Mammary epithelial cell (primary cell): ENCODE measurements at regions of chr13 and their contacts with region 1.

Region 1: DNA sequence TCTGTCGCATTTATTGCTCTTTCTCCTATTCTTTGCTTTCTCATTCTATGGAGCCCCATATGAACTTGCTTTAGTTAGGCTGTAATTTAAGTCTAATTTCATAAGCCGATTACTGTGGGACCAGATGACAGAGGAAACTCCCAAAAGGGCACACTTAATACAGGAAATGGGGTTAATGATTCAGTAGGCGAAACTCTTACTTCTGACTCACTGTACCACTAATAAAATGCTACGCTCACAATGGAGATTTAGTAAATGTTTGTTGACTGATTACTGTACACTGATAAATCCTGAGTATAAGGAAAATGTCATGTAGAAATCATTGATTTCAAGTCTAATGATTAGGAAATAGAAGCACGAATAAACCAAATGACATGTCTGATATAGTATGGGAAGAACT is 276.4 kb downstream of the KLF5 start:
- DNase-seq: peak; percentile 95
- H3K4me3 ChIP-seq: no peak overlapping the region
- H3K27ac ChIP-seq: peak overlapping the region; percentile 100
- H3K4me1 ChIP-seq: peaks cover 48% of the 10 kb centered on the region
- H3K27me3 ChIP-seq: no peaks in the 10 kb centered on the region
- CTCF ChIP-seq: no peak

Region 2: GRCh38 chr13:72839831-72840426 is 495.3 kb before region 1 on chr13:
- CTCF ChIA-PET with region 1: no interaction called
- dilution Hi-C with region 1: no loop called
- in situ Hi-C with region 1: no loop called
- intact Hi-C with region 1: loop called (anchors 1 kb)
- DNase-seq: peak; percentile 69
- H3K4me3 ChIP-seq: no peak overlapping the region
- H3K27ac ChIP-seq: peak overlapping the region; percentile 26
- H3K4me1 ChIP-seq: no peaks in the 10 kb centered on the region
- H3K27me3 ChIP-seq: no peaks in the 10 kb centered on the region
- CTCF ChIP-seq: peak; percentile 79 to 86

Region 3: DNA sequence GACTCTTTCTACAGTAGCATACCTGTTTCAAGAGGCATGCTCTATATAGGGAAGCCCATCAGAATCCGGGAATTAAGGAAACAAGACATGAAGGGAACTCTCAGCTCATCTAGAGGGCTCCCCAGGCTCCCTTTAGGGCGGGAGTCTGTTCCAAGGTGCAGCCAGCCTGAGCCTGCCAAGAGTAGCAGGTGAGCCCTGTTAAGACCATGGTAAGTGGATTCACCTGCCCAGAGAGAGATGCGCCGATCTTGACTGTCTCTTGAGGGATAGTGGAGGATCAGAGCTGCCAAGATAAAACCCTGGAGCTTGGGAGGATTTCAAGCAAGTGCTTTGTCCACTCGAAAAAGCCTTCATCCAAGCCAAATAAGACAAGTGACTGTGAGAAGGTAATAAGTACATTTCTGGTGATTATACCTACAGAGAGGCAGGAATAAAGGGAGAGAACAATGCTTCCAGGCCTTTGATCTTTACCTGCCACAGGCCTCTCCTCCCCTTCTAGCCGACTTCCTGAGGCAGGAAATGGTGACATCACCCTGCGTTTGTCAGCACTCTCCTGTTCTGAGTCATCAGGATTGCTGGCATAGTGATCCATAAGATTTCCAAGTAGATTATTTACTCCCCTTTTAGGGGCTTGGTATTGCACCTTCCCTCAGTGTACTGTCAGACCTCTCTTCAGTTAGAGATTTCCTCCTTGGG is 245.0 kb before region 1 on chr13:
- CTCF ChIA-PET with region 1: no interaction called
- dilution Hi-C with region 1: no loop called
- in situ Hi-C with region 1: loop called in 1 of 2 experiments (anchors 25 kb)
- intact Hi-C with region 1: no loop called
- DNase-seq: peak; percentile 91
- H3K4me3 ChIP-seq: no peak overlapping the region
- H3K27ac ChIP-seq: peak overlapping the region; percentile 42
- H3K4me1 ChIP-seq: peaks cover 5% of the 10 kb centered on the region
- H3K27me3 ChIP-seq: no peaks in the 10 kb centered on the region
- CTCF ChIP-seq: no peak

Region 4: DNA sequence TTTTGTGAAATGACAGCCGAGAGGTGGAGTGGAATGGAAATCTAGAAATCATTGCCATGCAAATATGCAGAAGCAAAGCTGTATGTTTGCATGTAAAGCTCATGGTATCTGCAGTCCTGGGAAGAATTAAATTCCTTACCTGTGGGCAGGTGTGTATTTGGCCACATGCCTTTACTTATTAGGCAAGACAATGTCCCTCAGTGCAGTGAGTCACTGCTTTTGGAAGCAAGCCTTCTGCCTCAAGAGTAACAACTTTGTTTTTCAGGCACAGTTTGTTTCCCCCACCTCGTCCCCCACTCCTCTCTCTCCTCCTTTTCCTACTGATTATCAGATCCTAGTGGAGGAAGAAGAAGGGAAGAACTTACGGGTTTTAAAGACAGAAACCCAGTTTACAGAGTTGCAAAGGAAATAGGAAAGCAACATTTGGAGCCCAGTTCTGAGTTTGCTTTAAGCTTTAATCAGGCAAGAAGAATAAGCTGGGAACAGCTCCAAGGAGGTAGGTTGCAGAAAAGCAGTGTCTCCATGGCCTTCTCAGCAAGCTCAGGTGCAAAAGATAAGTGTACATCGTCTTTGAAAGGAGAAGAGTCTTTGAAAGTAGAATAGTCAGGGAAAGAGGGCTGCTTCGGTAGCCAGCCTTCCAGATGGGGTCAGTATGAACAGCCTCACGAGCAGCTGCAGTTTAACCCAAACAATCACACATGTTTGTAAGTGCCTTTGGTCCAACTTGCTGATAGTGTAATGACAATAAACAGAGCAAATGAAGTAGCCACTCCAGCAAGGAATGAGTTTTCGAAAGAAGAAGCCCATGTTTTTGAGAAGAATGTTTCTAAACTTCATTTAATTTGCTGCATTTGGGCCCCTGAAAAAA is 86.3 kb before region 1 on chr13:
- CTCF ChIA-PET with region 1: no interaction called
- dilution Hi-C with region 1: no loop called
- in situ Hi-C with region 1: no loop called
- intact Hi-C with region 1: loop called (anchors 5 kb)
- DNase-seq: peak; percentile 86
- H3K4me3 ChIP-seq: no peak overlapping the region
- H3K27ac ChIP-seq: peak overlapping the region; percentile 60
- H3K4me1 ChIP-seq: peaks cover 17% of the 10 kb centered on the region
- H3K27me3 ChIP-seq: no peaks in the 10 kb centered on the region
- CTCF ChIP-seq: peak in 1 of 2 donors; percentile 0

Region 5: DNA sequence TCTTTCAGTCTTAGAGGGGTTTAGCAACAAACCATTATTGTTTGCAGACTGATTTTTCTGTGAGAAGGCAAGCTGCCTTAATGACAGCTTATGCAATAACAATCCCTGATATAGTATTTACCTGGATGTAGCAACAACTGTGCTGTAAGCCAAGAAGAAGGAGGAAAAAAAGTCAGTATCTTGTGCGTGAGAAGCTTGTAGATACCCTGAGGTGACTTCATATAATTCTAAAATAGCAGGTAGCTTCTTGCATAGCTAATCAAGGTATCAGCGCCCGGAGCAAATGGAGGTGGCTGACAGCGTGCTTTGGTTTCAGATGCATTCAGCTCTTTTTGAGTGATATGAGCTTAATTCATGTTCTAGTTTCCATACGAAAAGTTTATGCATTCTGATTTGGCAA is 33.4 kb after region 1 on chr13:
- CTCF ChIA-PET with region 1: no interaction called
- dilution Hi-C with region 1: no loop called
- in situ Hi-C with region 1: no loop called
- intact Hi-C with region 1: loop called (anchors 1 kb)
- DNase-seq: peak; percentile 87
- H3K4me3 ChIP-seq: no peak overlapping the region
- H3K27ac ChIP-seq: peak overlapping the region; percentile 78
- H3K4me1 ChIP-seq: peaks cover 31% of the 10 kb centered on the region
- H3K27me3 ChIP-seq: no peaks in the 10 kb centered on the region
- CTCF ChIP-seq: no peak

Region 6: DNA sequence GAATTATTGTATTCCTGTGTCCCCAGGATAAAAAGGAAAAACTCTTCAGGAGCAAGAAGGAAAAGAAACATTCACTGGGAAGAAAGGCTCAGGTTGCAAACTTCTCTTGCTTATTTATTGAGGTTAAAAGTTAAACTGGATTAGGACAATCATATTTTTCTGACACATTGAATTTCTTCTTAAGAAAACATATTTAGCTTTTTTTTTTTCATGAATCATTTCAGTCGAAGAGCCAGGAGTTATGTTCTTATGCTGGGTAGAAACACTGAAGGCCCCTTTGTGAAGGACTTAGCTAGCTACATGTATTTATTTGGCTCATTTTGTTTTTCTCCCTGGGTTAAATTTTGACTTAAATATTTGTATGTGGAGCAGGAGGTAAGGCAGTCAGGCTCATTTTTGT is 157.6 kb after region 1 on chr13:
- CTCF ChIA-PET with region 1: no interaction called
- dilution Hi-C with region 1: no loop called
- in situ Hi-C with region 1: no loop called
- intact Hi-C with region 1: loop called (anchors 10 kb)
- DNase-seq: peak; percentile 11
- H3K4me3 ChIP-seq: no peak overlapping the region
- H3K27ac ChIP-seq: no peak overlapping the region
- H3K4me1 ChIP-seq: peaks cover 14% of the 10 kb centered on the region
- H3K27me3 ChIP-seq: no peaks in the 10 kb centered on the region
- CTCF ChIP-seq: no peak

Region 7: DNA sequence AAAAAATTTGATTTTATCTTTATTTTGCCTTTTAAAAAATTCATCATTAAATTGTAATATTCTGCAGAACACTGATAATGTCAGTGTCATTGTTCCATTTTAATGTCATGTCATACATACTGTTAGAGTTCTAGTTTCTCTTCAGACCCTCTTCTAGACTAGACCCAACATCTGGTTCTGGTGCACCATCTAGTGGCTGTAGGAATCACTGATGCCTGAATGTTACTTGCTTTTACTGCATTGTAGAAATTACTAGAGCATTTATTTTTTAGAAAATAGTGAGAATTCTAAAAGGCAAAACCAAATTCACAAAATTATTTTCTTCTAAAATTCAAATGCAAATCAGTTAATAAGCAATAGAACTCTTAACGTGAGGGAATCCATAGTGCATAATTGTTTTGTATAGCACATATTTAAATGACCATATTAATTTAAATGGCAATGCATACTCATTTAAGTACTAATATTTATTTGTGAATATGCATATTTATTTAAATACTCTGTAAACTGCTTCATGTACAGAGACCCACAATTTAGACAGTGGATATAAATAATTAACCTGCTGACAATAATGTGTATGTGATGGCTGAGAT is 373.3 kb after region 1 on chr13:
- CTCF ChIA-PET with region 1: no interaction called
- dilution Hi-C with region 1: no loop called
- in situ Hi-C with region 1: no loop called
- intact Hi-C with region 1: loop called (anchors 1 kb)
- DNase-seq: peak; percentile 63
- H3K4me3 ChIP-seq: no peak overlapping the region
- H3K27ac ChIP-seq: peak overlapping the region; percentile 42
- H3K4me1 ChIP-seq: no peaks in the 10 kb centered on the region
- H3K27me3 ChIP-seq: no peaks in the 10 kb centered on the region
- CTCF ChIP-seq: peak; percentile 87 to 93